Activated T-helper 1 cell treated with anti-CD3 and anti-CD28 coated beads, Interleukin-12 subunit alpha, Interleukin-12 subunit beta, Interleukin-2, Interleukin-4 antibody, amounts not matched to agents 30 ng/mL and 10 ng/mL and 1 ng/mL, durations not matched to agents 14 hours and 24 hours and 36 hours (primary cell): ENCODE measurements at regions of chr17 and their contacts with region 1.

Region 1: GRCh38 chr17:7572588-7573323 is 6.7 kb upstream of the CD68 start:
- DNase-seq: peak; percentile 100
- H3K4me3 Mint-ChIP-seq: peak overlapping the region; percentile 94
- H3K27ac Mint-ChIP-seq: peak overlapping the region; percentile 100
- H3K4me1 Mint-ChIP-seq: peaks cover 54% of the 10 kb centered on the region
- H3K27me3 Mint-ChIP-seq: peaks cover 2% of the 10 kb centered on the region

Region 2: GRCh38 chr17:7045909-7046724 is 526.6 kb before region 1 on chr17:
- intact Hi-C with region 1: no loop called
- DNase-seq: no peak
- H3K4me3 Mint-ChIP-seq: peak overlapping the region; percentile 66
- H3K27ac Mint-ChIP-seq: peak overlapping the region; percentile 72
- H3K4me1 Mint-ChIP-seq: peaks cover 20% of the 10 kb centered on the region
- H3K27me3 Mint-ChIP-seq: peaks cover 8% of the 10 kb centered on the region

Region 3: GRCh38 chr17:7204828-7205461 is 367.8 kb before region 1 on chr17:
- intact Hi-C with region 1: no loop called
- DNase-seq: peak; percentile 92
- H3K4me3 Mint-ChIP-seq: peak overlapping the region; percentile 85
- H3K27ac Mint-ChIP-seq: peak overlapping the region; percentile 86
- H3K4me1 Mint-ChIP-seq: peaks cover 24% of the 10 kb centered on the region
- H3K27me3 Mint-ChIP-seq: peaks cover 2% of the 10 kb centered on the region

Region 4: GRCh38 chr17:7329374-7329996 is 243.3 kb before region 1 on chr17:
- intact Hi-C with region 1: loop called (anchors 1 kb)
- DNase-seq: peak; percentile 94
- H3K4me3 Mint-ChIP-seq: peak overlapping the region; percentile 93
- H3K27ac Mint-ChIP-seq: peak overlapping the region; percentile 94
- H3K4me1 Mint-ChIP-seq: peaks cover 38% of the 10 kb centered on the region
- H3K27me3 Mint-ChIP-seq: no peaks in the 10 kb centered on the region

Region 5: DNA sequence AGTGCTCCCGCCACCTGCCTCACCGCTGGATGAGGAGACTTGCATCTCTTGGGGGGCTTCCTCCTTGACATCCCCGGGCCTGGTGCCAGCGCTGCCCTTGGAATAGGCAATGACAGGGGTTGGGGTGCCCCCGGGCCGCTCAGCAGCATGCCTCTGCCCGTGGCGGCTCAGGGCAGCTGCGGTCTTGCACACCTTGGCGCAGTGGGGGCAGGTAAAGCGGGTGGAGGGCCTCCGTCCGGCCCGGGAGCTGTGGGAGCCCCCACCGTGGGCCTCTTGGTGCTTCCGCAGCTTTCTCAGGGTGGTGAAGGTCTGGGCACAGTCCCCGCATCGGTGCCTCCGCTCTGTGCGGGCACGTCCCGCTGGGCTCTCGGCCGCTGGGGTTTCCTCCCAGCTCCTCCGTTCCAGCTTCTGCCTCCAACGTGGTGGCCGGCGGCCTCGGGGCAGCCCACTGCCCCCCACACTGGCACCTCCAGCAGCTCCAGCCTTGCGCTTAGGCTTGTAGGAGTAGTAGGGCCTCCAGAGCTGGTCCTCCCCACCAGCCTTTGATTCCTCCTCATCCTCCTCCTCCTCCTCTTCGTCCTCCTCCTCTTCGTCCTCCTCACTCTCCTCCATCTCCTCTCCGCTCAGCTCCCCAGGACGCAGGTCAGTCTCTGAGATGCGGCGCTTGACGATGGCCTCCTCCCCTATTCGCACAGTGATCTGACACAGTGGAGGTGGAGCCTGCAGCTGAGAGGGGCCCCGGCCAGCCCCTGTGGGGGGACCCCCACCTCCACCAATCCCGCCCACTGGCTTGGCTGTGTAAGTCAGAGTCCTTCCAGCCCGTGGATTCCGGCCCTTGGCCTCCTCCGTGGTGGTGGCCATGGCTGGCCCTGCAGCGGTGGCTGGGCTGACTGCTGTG is 110.0 kb before region 1 on chr17:
- intact Hi-C with region 1: no loop called
- DNase-seq: no peak
- H3K4me3 Mint-ChIP-seq: no peak overlapping the region
- H3K27ac Mint-ChIP-seq: no peak overlapping the region
- H3K4me1 Mint-ChIP-seq: peaks cover 7% of the 10 kb centered on the region
- H3K27me3 Mint-ChIP-seq: no peaks in the 10 kb centered on the region

Region 6: DNA sequence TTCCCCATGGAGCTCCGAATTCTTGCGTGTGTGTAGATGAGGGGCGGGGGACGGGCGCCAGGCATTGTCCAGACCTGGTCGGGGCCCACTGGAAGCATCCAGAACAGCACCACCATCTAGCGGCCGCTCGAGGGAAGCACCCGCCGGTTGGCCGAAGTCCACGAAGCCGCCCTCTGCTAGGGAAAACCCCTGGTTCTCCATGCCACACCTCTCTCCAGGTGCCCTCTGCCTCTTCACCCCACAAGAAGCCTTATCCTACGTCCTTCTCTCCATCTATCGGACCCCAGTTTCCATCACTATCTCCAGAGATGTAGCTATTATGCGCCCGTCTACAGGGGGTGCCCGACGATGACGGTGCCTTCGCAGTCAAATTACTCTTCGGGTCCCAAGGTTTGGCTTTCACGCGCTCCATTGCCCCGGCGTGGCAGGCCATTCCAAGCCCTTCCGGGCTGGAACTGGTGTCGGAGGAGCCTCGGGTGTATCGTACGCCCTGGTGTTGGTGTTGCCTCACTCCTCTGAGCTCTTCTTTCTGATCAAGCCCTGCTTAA is 11.7 kb before region 1 on chr17:
- intact Hi-C with region 1: loop called (anchors 1 kb)
- DNase-seq: peak; percentile 81
- H3K4me3 Mint-ChIP-seq: peak overlapping the region; percentile 97
- H3K27ac Mint-ChIP-seq: peak overlapping the region; percentile 92
- H3K4me1 Mint-ChIP-seq: peaks cover 56% of the 10 kb centered on the region
- H3K27me3 Mint-ChIP-seq: no peaks in the 10 kb centered on the region

Region 7: GRCh38 chr17:7614422-7615264 is 41.9 kb after region 1 on chr17 and contains the start of gene FXR2:
- intact Hi-C with region 1: loop called (anchors 1 kb)
- DNase-seq: peak; percentile 99
- H3K4me3 Mint-ChIP-seq: peak within 1 kb of the TSS; percentile 85
- H3K27ac Mint-ChIP-seq: peak within 1 kb of the TSS; percentile 89
- H3K4me1 Mint-ChIP-seq: peaks cover 39% of the 10 kb centered on the region
- H3K27me3 Mint-ChIP-seq: no peaks in the 10 kb centered on the region
- total RNA-seq, gene FXR2: 59.5 and 63.6 TPM in 2 replicates

Region 8: DNA sequence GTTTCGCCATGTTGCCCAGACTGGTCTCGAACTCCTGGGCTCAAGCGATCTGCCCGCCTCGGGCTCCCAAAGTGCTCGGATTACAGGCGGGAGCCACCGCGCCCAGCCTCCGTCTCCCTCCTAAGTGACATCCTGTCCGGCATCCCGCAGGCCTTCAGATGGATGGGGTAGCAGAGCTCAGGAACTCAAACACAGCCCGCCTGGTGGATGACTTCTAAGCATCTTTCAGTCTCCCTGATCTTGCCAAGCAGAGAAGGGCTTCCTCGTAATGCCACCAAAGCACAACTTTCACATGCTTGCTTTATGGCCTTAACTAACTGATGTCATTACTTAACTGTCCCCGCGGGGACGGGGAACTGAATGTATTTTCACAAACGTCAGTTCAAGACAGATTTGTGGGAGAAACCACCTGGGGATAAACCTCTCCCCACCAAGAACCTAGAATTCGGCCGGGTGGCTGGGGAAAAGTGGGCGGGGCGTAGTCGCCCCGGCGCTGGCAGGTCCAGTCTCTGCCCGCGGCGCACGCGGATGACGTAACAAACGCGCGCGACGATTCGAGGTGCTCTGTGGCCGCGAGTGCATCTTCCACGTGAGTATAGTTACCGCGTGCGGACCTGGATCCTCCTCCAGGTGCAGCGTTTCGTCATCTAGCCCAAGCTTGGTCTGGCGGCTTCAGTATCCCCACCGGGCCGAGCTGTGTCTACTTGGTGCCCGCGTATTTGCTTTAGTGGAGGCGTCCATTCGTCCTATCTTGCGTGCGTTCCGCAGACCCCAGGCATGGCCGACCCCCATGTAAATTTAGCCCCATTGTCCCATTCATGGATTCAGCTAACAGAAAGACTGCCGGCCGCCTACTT is 676.2 kb after region 1 on chr17 and contains the start of gene PFAS:
- intact Hi-C with region 1: loop called (anchors 5 kb)
- DNase-seq: peak; percentile 95
- H3K4me3 Mint-ChIP-seq: peak within 1 kb of the TSS; percentile 98
- H3K27ac Mint-ChIP-seq: peak within 1 kb of the TSS; percentile 100
- H3K4me1 Mint-ChIP-seq: peaks cover 40% of the 10 kb centered on the region
- H3K27me3 Mint-ChIP-seq: peaks cover 1% of the 10 kb centered on the region
- total RNA-seq, gene PFAS: 189 and 204 TPM in 2 replicates